ENCODE measurements at regions of chr13 and their contacts with region 1.

Region 1: DNA sequence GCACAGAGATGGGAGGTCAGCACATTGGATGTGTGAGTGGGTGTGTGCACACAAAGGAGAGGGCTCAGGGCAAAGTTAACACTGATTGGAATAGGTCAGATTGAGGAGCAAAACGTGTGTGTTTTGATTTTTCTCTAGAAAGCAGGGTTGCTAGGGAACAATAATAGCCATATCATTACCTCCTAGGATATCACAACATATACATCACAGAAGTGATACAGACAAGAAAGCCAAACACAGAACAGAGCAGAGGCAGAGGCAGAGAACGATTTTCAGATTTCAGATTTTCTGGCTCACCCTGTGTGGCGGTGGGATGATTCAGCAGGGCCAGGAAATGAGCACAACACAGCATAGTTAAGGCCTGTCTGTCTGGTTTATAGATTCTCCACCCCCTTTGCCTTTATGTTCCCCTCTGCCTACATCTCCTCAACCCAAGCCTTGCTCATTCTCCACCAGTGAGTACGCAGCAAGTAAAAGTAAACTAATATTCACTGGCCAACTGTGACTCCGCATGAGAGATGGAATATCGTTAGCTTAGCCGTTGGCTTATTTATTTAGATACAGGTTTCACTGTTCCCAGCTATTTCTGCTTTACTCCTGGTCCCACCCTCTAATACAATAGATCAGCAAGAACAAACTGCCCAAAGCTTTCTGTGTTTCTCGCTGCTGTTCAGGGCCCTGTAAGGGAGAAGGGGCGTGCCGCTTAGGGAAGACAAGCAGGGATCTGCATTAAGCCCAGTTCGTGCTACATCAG is 182.7 kb upstream of the TSC22D1 start:
- DNase-seq: no peak
- ATAC-seq: no peak
- H3K4me3 ChIP-seq: no peak overlapping the region
- H3K27ac ChIP-seq: no peak overlapping the region
- H3K4me1 ChIP-seq: peaks cover 0 to 20% (median 5%) of the 10 kb centered on the region in 12 donors
- H3K27me3 ChIP-seq: no peaks in the 10 kb centered on the region
- CTCF ChIP-seq: no peak
- POLR2A ChIP-seq: no peak

Region 2: GRCh38 chr13:44703371-44703770 is 55.4 kb before region 1 on chr13:
- intact Hi-C with region 1: loop called in 1 of 10 experiments (anchors 10 kb)
- DNase-seq: no peak
- ATAC-seq: no peak
- H3K4me3 ChIP-seq: no peak overlapping the region
- H3K27ac ChIP-seq: no peak overlapping the region
- H3K4me1 ChIP-seq: no peaks in the 10 kb centered on the region
- H3K27me3 ChIP-seq: no peaks in the 10 kb centered on the region
- CTCF ChIP-seq: no peak
- POLR2A ChIP-seq: no peak